IMR-90 (cell line): ENCODE measurements at regions of chr10 and their contacts with region 1.

Region 1: GRCh38 chr10:88095223-88095721 is 231.8 kb downstream of the PTEN start:
- DNase-seq: peak; percentile 89
- ATAC-seq: peak; percentile 97
- H3K4me3 ChIP-seq: no peak overlapping the region
- H3K27ac ChIP-seq: 0 out of 2 replicates have a peak overlapping the region, but pooled peaks have one; percentile 9
- H3K4me1 ChIP-seq: peaks cover 4% of the 10 kb centered on the region
- H3K27me3 ChIP-seq: peaks cover 3% of the 10 kb centered on the region; the same call in 1 of the 2 replicates
- CTCF ChIP-seq: no peak
- POLR2A ChIP-seq: no peak
- RAD21 ChIP-seq: no peak

Region 2: DNA sequence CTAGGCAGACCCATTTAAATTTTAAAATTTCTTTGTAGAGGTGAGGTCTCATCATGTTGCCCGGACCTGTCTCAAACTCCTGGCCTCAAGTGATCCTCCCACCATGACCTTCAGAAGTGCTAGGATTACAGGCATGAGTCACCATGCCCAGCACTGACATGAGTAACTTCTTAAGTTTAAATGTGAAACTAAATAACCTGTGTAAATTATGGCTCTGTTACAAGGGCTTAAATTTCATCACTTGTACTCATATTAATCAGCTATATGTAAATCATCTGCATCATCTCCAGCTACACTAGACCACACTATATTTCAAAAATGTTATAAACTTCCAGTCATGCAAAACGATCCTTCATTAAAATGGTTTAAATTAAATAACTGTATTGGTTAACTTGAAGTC is 333.4 kb before region 1 on chr10:
- CTCF ChIA-PET with region 1: no interaction called
- POLR2A ChIA-PET with region 1: no interaction called
- dilution Hi-C with region 1: no loop called
- in situ Hi-C with region 1: no loop called
- intact Hi-C with region 1: no loop called
- DNase-seq: peak; percentile 82
- ATAC-seq: peak; percentile 77
- H3K4me3 ChIP-seq: no peak overlapping the region
- H3K27ac ChIP-seq: no peak overlapping the region
- H3K4me1 ChIP-seq: peaks cover 2% of the 10 kb centered on the region
- H3K27me3 ChIP-seq: no peaks in the 10 kb centered on the region
- CTCF ChIP-seq: no peak
- POLR2A ChIP-seq: no peak
- RAD21 ChIP-seq: no peak

Region 3: GRCh38 chr10:88032566-88032965 is 62.7 kb before region 1 on chr10:
- CTCF ChIA-PET with region 1: interaction called, 3 read pairs
- POLR2A ChIA-PET with region 1: no interaction called
- dilution Hi-C with region 1: no loop called
- in situ Hi-C with region 1: no loop called
- intact Hi-C with region 1: loop called (anchors 5 kb)
- DNase-seq: peak; percentile 86
- ATAC-seq: peak; percentile 95
- H3K4me3 ChIP-seq: no peak overlapping the region
- H3K27ac ChIP-seq: no peak overlapping the region
- H3K4me1 ChIP-seq: peaks cover 3% of the 10 kb centered on the region
- H3K27me3 ChIP-seq: 0 out of 2 replicates have a peak, but pooled peaks cover 3% of the 10 kb centered on the region
- CTCF ChIP-seq: no peak
- POLR2A ChIP-seq: no peak
- RAD21 ChIP-seq: 0 out of 2 replicates have a peak, but pooled peaks have one; percentile 2